ENCODE measurements at regions of chr7 and their contacts with region 1.

Region 1: GRCh38 chr7:101947899-101948298 is 130.5 kb downstream of the CUX1 start:
- DNase-seq: no peak
- H3K4me3 ChIP-seq: no peak overlapping the region
- H3K27ac ChIP-seq: no peak overlapping the region
- H3K4me1 ChIP-seq: no peaks in the 10 kb centered on the region
- H3K27me3 ChIP-seq: no peaks in the 10 kb centered on the region
- CTCF ChIP-seq: no peak
- POLR2A ChIP-seq: no peak

Region 2: GRCh38 chr7:101804967-101805366 is 142.9 kb before region 1 on chr7:
- intact Hi-C with region 1: loop called (anchors 2 kb)
- DNase-seq: no peak
- H3K4me3 ChIP-seq: no peak overlapping the region
- H3K27ac ChIP-seq: no peak overlapping the region
- H3K4me1 ChIP-seq: no peaks in the 10 kb centered on the region
- H3K27me3 ChIP-seq: peaks cover 0 to 51% of the 10 kb centered on the region in 2 donors
- CTCF ChIP-seq: peak; percentile 7 to 29 (median 28)
- POLR2A ChIP-seq: no peak